Activated T-helper 1 cell treated with anti-CD3 and anti-CD28 coated beads, Interleukin-12 subunit alpha, Interleukin-12 subunit beta, Interleukin-2, Interleukin-4 antibody, amounts not matched to agents 30 ng/mL and 10 ng/mL and 1 ng/mL, durations not matched to agents 14 hours and 24 hours and 36 hours (primary cell): ENCODE measurements at regions of chr2 and their contacts with region 1.

Region 1: GRCh38 chr2:118088051-118089024 is at the start of gene INSIG2:
- DNase-seq: peak; percentile 92
- H3K4me3 Mint-ChIP-seq: peak within 1 kb of the TSS; percentile 94
- H3K27ac Mint-ChIP-seq: peak within 1 kb of the TSS; percentile 95
- H3K4me1 Mint-ChIP-seq: peaks cover 20% of the 10 kb centered on the region
- H3K27me3 Mint-ChIP-seq: no peaks in the 10 kb centered on the region
- total RNA-seq, gene INSIG2: 31.3 and 34.6 TPM in 2 replicates

Region 2: GRCh38 chr2:117058366-117058765 is 1030.0 kb before region 1 on chr2:
- intact Hi-C with region 1: no loop called
- DNase-seq: no peak
- H3K4me3 Mint-ChIP-seq: no peak overlapping the region
- H3K27ac Mint-ChIP-seq: no peak overlapping the region
- H3K4me1 Mint-ChIP-seq: no peaks in the 10 kb centered on the region
- H3K27me3 Mint-ChIP-seq: no peaks in the 10 kb centered on the region

Region 3: DNA sequence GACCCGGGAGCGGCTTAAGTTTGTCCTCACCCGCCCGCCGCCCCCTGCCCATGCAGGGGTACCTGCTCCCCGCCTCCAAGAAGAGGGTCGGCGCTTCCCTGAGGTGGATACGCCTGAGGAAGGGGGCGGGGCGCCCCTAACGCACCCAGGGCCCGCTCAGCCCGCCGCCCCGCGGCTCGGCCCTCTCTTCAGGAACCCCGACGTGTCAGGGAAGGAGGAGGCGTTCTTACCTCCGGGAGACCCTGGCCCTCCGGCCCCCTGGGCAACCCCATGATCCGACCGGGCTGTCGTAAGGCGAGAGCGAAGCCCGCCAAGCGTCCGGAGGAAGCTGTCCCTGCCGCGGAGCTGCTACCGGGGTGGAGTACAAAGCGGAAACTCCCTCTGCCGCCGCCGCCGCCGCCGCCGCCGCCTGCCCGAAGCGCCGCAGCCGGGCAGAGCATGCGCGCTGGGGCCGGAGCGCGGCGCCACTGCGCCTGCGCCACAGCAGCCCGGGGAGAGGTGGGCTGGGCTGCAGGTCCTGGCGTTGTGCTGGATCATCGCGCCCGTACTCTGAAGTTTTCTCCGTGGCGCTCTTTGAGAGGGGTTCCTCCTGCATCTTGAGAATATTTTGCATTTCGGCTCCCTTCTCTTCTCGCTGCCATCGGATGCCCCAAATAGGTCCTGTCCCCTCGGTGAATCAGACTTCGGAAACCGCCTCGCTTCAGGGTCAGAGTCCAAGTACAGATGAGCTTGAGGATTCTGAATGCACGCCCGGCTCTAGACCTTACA is 74.4 kb before region 1 on chr2 and contains the start of gene CCDC93:
- intact Hi-C with region 1: loop called (anchors 1 kb)
- DNase-seq: peak; percentile 87
- H3K4me3 Mint-ChIP-seq: peak within 1 kb of the TSS; percentile 92
- H3K27ac Mint-ChIP-seq: peak within 1 kb of the TSS; percentile 88
- H3K4me1 Mint-ChIP-seq: peaks cover 42% of the 10 kb centered on the region
- H3K27me3 Mint-ChIP-seq: no peaks in the 10 kb centered on the region
- total RNA-seq, gene CCDC93: 33.3 and 34.4 TPM in 2 replicates

Region 4: DNA sequence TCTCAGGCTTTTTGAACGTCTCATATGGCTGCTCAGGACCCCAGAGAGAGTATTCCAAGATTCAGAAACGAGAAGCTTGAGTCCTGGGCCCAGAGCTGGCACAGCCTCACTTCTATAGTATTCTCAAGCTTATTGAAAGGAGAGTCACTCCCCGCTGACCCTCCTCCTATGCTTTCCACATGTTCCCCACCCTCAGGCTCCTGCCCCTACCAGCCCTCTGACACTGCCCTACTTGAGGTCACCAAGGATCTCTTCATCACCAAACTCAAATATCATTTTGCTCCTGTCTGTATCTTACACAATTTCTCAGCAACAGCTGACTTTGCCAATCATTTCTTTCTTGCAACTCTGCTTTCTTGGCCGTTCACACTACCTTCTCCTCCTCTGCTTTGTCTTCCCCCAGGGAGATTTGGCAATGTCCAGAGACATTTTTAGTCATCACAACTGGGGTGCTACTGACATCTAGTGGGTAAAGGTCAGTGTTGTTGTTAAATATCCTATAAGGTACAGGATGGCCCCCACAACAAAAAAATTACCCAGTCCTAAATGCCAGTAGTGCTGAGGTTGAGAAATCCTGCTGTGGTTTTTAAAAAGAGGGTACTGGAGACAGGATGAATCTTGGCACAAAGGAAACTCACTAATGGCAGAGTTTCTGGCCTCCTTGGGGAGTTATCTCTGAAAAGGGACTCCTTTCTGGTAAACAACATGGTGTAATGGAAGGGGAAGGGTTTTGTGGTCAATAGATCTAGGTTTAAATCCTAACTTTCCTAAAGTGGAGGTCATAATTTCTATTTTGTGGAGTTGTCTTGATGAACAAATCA is 27.0 kb before region 1 on chr2:
- intact Hi-C with region 1: loop called (anchors 2 kb)
- DNase-seq: no peak
- H3K4me3 Mint-ChIP-seq: no peak overlapping the region
- H3K27ac Mint-ChIP-seq: no peak overlapping the region
- H3K4me1 Mint-ChIP-seq: peaks cover 13% of the 10 kb centered on the region
- H3K27me3 Mint-ChIP-seq: peaks cover 9% of the 10 kb centered on the region

Region 5: GRCh38 chr2:118148809-118149208 is 60.5 kb after region 1 on chr2:
- intact Hi-C with region 1: loop called (anchors 1 kb)
- DNase-seq: no peak
- H3K4me3 Mint-ChIP-seq: no peak overlapping the region
- H3K27ac Mint-ChIP-seq: no peak overlapping the region
- H3K4me1 Mint-ChIP-seq: no peaks in the 10 kb centered on the region
- H3K27me3 Mint-ChIP-seq: peaks cover 8% of the 10 kb centered on the region

Region 6: GRCh38 chr2:118186110-118186857 is 97.9 kb after region 1 on chr2:
- intact Hi-C with region 1: loop called (anchors 1 kb)
- DNase-seq: peak; percentile 83
- H3K4me3 Mint-ChIP-seq: peak overlapping the region; percentile 90
- H3K27ac Mint-ChIP-seq: peak overlapping the region; percentile 98
- H3K4me1 Mint-ChIP-seq: peaks cover 53% of the 10 kb centered on the region
- H3K27me3 Mint-ChIP-seq: no peaks in the 10 kb centered on the region

Region 7: GRCh38 chr2:118309946-118310680 is 221.8 kb after region 1 on chr2:
- intact Hi-C with region 1: loop called (anchors 1 kb)
- DNase-seq: peak; percentile 55
- H3K4me3 Mint-ChIP-seq: peak overlapping the region; percentile 83
- H3K27ac Mint-ChIP-seq: peak overlapping the region; percentile 89
- H3K4me1 Mint-ChIP-seq: no peaks in the 10 kb centered on the region
- H3K27me3 Mint-ChIP-seq: peaks cover 25% of the 10 kb centered on the region